Activated CD4-positive, alpha-beta memory T cell treated with anti-CD3 and anti-CD28 coated beads for 36 hours (primary cell): ENCODE measurements at regions of chr12 and their contacts with region 1.

Region 1: GRCh38 chr12:15856097-15856982 is 25.8 kb upstream of the STRAP start:
- DNase-seq: peak; percentile 22
- H3K4me3 Mint-ChIP-seq: no peak overlapping the region
- H3K27ac Mint-ChIP-seq: no peak overlapping the region
- H3K4me1 Mint-ChIP-seq: no peaks in the 10 kb centered on the region
- H3K27me3 Mint-ChIP-seq: peaks cover 5% of the 10 kb centered on the region

Region 2: DNA sequence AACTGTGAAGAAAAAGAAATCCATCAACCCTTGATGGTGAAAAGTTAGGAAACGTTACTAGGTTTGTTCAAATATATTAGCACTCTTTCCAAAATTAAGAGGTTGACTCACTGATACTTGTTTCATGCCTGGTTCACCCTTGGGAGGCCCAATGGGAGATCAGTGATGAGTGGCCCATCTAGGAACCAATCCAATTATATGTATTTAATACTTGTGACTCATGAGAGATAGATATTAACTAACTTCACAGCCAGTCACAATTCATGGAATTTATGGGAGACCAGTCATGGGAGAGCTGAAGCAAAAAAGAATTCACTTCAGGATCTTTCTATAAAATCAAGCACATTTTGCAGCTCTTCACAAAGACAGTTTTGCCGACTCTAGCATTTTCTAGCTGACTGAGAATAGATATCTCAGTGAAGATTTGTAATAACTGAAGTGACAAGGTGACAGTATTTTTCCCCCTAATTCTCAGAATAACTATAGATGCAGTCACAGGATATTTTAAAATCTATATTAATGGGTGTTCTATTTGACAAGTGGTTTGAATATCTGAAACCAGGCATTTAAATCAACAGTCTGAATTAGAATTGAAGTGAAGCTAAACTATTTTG is 297.3 kb before region 1 on chr12:
- CTCF ChIA-PET with region 1: no interaction called
- POLR2A ChIA-PET with region 1: no interaction called
- intact Hi-C with region 1: no loop called
- DNase-seq: no peak
- H3K4me3 Mint-ChIP-seq: no peak overlapping the region
- H3K27ac Mint-ChIP-seq: no peak overlapping the region
- H3K4me1 Mint-ChIP-seq: peaks cover 49% of the 10 kb centered on the region
- H3K27me3 Mint-ChIP-seq: no peaks in the 10 kb centered on the region

Region 3: GRCh38 chr12:15590180-15590826 is 266.0 kb before region 1 on chr12:
- CTCF ChIA-PET with region 1: interaction called, 85 read pairs
- POLR2A ChIA-PET with region 1: no interaction called
- intact Hi-C with region 1: loop called (anchors 1 kb)
- DNase-seq: peak; percentile 56
- H3K4me3 Mint-ChIP-seq: peak overlapping the region; percentile 70
- H3K27ac Mint-ChIP-seq: peak overlapping the region; percentile 21
- H3K4me1 Mint-ChIP-seq: peaks cover 8% of the 10 kb centered on the region
- H3K27me3 Mint-ChIP-seq: no peaks in the 10 kb centered on the region

Region 4: GRCh38 chr12:15996948-15997347 is 140.6 kb after region 1 on chr12:
- CTCF ChIA-PET with region 1: no interaction called
- POLR2A ChIA-PET with region 1: no interaction called
- intact Hi-C with region 1: no loop called
- DNase-seq: no peak
- H3K4me3 Mint-ChIP-seq: no peak overlapping the region
- H3K27ac Mint-ChIP-seq: no peak overlapping the region
- H3K4me1 Mint-ChIP-seq: no peaks in the 10 kb centered on the region
- H3K27me3 Mint-ChIP-seq: no peaks in the 10 kb centered on the region